Activated T-helper 1 cell treated with anti-CD3 and anti-CD28 coated beads, Interleukin-12 subunit alpha, Interleukin-12 subunit beta, Interleukin-2, Interleukin-4 antibody, amounts not matched to agents 30 ng/mL and 10 ng/mL and 1 ng/mL, durations not matched to agents 14 hours and 24 hours and 36 hours (primary cell): ENCODE measurements at regions of chr7 and their contacts with region 1.

Region 1: GRCh38 chr7:101244375-101245146 is at the start of gene FIS1:
- DNase-seq: peak; percentile 91
- H3K4me3 Mint-ChIP-seq: peak within 1 kb of the TSS; percentile 94
- H3K27ac Mint-ChIP-seq: peak within 1 kb of the TSS; percentile 98
- H3K4me1 Mint-ChIP-seq: peaks cover 24% of the 10 kb centered on the region
- H3K27me3 Mint-ChIP-seq: no peaks in the 10 kb centered on the region
- total RNA-seq, gene FIS1: 138 and 143 TPM in 2 replicates

Region 2: GRCh38 chr7:100889761-100890634 is 354.6 kb before region 1 on chr7:
- intact Hi-C with region 1: loop called (anchors 5 kb)
- DNase-seq: peak; percentile 91
- H3K4me3 Mint-ChIP-seq: peak overlapping the region; percentile 82
- H3K27ac Mint-ChIP-seq: peak overlapping the region; percentile 67
- H3K4me1 Mint-ChIP-seq: peaks cover 42% of the 10 kb centered on the region
- H3K27me3 Mint-ChIP-seq: peaks cover 23% of the 10 kb centered on the region

Region 3: GRCh38 chr7:101321491-101322401 is 77.2 kb after region 1 on chr7 and contains the start of gene IFT22:
- intact Hi-C with region 1: loop called (anchors 2 kb)
- DNase-seq: peak; percentile 85
- H3K4me3 Mint-ChIP-seq: peak within 1 kb of the TSS; percentile 88
- H3K27ac Mint-ChIP-seq: peak within 1 kb of the TSS; percentile 88
- H3K4me1 Mint-ChIP-seq: no peaks in the 10 kb centered on the region
- H3K27me3 Mint-ChIP-seq: peaks cover 10% of the 10 kb centered on the region
- total RNA-seq, gene IFT22: 4.4 and 5.5 TPM in 2 replicates